Dendritic cell treated with granulocyte-macrophage colony-stimulating factor and Interleukin-4, amounts not matched to agents 40 ng/mL and 50 ng/mL, for 4 days (primary cell): ENCODE measurements at regions of chr1 and their contacts with region 1.

Region 1: DNA sequence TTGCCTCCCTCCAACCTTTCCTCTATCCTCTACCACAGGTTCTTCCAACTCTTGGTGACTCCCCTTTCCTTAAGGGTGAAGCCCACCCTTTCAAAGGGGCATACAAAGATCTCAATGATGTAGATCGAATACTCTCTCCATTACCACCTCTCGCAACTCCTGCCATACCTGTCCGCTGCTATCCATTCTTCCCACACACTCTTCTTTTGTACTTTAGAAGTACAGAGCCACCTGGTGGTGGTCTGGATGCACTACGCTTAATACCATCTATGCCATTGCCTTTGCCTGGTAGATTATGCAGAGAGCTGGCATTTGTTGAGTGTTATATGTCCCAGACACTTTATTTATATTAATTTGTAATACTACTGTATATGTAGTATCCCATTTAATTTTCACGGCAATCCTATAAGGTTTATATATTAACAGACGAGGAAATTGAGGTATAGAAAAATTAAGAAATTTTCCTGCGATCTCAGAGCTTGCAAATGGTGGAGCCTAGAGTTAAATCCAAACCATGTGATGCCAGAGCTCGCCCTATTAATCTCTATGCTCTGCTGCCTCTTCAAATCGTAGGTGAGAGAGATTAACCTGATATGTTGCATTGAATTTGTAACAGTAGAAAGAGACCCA is 22.9 kb downstream of the TSHB start:
- H3K4me3 Mint-ChIP-seq: no peak overlapping the region
- H3K27ac Mint-ChIP-seq: no peak overlapping the region
- H3K4me1 Mint-ChIP-seq: no peaks in the 10 kb centered on the region
- H3K27me3 Mint-ChIP-seq: no peaks in the 10 kb centered on the region

Region 2: GRCh38 chr1:114979278-114979891 is 73.2 kb before region 1 on chr1:
- intact Hi-C with region 1: loop called (anchors 1 kb)
- H3K4me3 Mint-ChIP-seq: no peak overlapping the region
- H3K27ac Mint-ChIP-seq: no peak overlapping the region
- H3K4me1 Mint-ChIP-seq: peaks cover 7% of the 10 kb centered on the region
- H3K27me3 Mint-ChIP-seq: no peaks in the 10 kb centered on the region

Region 3: DNA sequence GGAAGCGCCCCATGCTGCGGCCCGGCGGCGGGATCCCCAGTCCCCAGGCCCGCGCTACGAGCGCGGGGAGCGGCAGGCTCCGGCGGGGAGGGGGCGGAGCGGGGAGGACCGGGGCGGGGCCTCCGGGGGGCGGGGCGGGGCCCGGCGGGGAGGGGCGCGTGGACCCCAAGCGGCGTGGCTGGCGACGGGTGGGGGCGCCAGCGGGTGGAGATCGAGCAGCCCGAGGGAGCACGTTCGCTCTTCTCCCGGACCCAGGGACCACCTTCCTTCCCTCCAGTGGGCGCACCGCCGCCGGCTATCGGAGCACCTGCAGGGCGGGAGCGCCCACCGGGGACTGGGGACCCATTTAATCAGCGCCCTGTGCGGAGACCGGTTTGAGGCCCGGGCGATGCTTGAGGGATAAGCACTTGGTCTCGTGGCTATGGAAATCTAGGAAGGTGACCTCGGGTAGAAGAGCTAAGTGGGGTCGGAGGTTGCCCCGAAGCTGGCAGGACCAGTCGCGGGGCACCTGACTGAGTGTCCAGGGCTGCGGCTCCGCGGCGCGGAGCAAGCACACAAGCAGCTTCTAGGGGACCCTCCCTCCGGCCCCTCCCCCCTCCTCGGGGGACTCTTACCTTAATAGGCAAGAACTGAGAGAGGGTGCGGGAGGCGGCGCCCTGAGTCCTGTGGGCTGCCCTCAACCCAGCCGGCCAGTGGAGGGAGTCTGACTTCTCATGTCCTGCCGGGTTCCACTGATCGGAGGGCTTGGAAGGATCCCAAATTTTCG is 37.0 kb after region 1 on chr1 and contains the start of gene TSPAN2:
- intact Hi-C with region 1: loop called (anchors 5 kb)
- H3K4me3 Mint-ChIP-seq: peak within 1 kb of the TSS; percentile 81
- H3K27ac Mint-ChIP-seq: peak within 1 kb of the TSS; percentile 62
- H3K4me1 Mint-ChIP-seq: peaks cover 46% of the 10 kb centered on the region
- H3K27me3 Mint-ChIP-seq: peaks cover 12% of the 10 kb centered on the region